CD4-positive, alpha-beta memory T cell (primary cell): ENCODE measurements at regions of chr14 and their contacts with region 1.

Region 1: GRCh38 chr14:50085570-50086320 is 30.6 kb downstream of the VCPKMT start:
- DNase-seq: peak; percentile 21 to 48 (median 28)
- H3K4me3 ChIP-seq: no peak overlapping the region
- H3K4me3 Mint-ChIP-seq: peak overlapping the region; percentile 23 to 78 (median 71)
- H3K27ac ChIP-seq: peak overlapping the region; percentile 99
- H3K27ac Mint-ChIP-seq: peak overlapping the region; percentile 83 to 99 (median 95)
- H3K4me1 ChIP-seq: peaks cover 88% of the 10 kb centered on the region
- H3K4me1 Mint-ChIP-seq: peaks cover 58 to 89% (median 76%) of the 10 kb centered on the region in 4 donors
- H3K27me3 ChIP-seq: no peaks in the 10 kb centered on the region
- H3K27me3 Mint-ChIP-seq: no peaks in the 10 kb centered on the region

Region 2: GRCh38 chr14:49892636-49893308 is 193.0 kb before region 1 on chr14 and contains the start of gene ARF6:
- CTCF ChIA-PET with region 1: no interaction called
- POLR2A ChIA-PET with region 1: interaction called, 21 read pairs
- intact Hi-C with region 1: loop called (anchors 1 kb)
- DNase-seq: peak; percentile 92 to 94 (median 92)
- H3K4me3 ChIP-seq: peak within 1 kb of the TSS; percentile 75 to 100
- H3K4me3 Mint-ChIP-seq: peak within 1 kb of the TSS; percentile 95 to 99 (median 98)
- H3K27ac ChIP-seq: peak within 1 kb of the TSS; percentile 98
- H3K27ac Mint-ChIP-seq: peak within 1 kb of the TSS; percentile 93 to 100 (median 99)
- H3K4me1 ChIP-seq: peaks cover 35% of the 10 kb centered on the region
- H3K4me1 Mint-ChIP-seq: peaks cover 13 to 45% (median 22%) of the 10 kb centered on the region in 4 donors
- H3K27me3 ChIP-seq: no peaks in the 10 kb centered on the region
- H3K27me3 Mint-ChIP-seq: no peaks in the 10 kb centered on the region
- total RNA-seq, gene ARF6: 116 to 124 TPM

Region 3: DNA sequence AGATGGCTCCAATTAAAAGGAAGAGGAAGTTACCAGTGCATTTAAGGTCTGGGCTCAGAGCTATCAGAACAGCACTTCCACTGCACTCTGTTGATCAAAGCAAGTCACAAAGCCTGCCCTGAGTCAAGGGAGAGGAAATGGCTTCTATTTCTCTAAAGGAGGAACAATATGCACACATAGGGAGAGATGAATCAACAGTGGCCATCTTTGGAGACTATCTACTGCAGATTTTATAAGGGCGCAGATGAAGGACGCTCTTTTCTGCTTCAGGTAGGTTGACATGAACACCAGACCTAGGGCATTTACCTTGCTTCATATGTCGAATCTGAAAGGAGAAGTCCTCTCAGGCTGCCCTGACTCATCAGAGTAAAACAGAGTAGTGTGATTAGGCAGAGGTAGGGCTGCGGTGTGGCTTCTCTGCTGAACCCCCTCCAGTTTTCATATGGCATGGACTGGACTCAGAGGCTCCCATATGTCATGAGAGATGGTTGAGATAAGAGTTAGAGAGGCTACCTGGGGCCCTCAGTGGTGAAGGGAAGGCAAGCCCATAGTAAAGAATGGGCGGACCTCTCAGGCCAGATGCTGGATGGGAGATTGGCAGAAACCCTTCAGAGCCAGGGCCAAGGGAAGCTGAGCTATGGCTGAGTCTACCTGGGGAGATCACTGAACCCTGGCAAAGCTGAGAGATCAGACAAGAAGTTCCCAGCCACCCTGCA is 108.5 kb before region 1 on chr14:
- CTCF ChIA-PET with region 1: interaction called, 6 read pairs
- POLR2A ChIA-PET with region 1: interaction called, 35 read pairs
- intact Hi-C with region 1: no loop called
- DNase-seq: peak; percentile 48 to 66 (median 61)
- H3K4me3 ChIP-seq: peak overlapping the region; percentile 50 to 53
- H3K4me3 Mint-ChIP-seq: peak overlapping the region; percentile 75 to 89 (median 84)
- H3K27ac ChIP-seq: peak overlapping the region; percentile 48
- H3K27ac Mint-ChIP-seq: peak overlapping the region; percentile 91 to 95 (median 93)
- H3K4me1 ChIP-seq: peaks cover 100% of the 10 kb centered on the region
- H3K4me1 Mint-ChIP-seq: peaks cover 60 to 96% (median 87%) of the 10 kb centered on the region in 4 donors
- H3K27me3 ChIP-seq: no peaks in the 10 kb centered on the region
- H3K27me3 Mint-ChIP-seq: no peaks in the 10 kb centered on the region

Region 4: DNA sequence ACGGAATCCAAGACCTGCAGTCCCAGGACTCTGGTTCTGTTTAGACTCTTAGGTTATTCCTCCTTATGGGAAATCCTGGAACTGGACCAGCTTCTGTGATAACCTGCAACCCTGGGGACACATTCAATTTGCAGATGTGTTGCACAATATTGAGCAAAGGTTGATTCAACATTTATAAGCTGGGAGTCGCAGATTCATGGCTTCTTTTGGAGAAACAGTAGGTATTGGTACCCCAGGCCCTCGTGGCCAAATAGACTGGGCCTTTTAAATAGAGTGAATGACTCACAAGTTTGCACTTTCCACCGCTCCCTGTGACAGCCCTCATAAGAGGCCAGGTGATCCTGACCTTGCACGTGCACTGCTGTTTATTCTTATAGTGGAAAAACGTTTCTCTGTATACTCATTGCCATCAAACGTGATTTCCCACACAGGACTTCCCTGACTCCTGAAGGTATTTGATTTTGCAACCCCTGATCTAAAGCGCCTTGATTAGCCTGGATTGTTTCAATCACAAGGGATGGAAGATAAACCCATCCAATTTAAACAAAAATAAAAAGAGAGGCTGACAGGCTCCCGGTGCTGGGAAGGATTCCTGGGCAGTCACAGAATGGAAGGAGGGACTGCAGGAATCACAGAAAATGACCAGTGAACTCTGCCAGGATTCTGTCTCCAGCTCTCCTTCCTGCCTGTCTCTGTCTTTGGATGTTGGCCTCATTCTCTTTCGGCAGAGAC is 67.4 kb before region 1 on chr14:
- CTCF ChIA-PET with region 1: no interaction called
- POLR2A ChIA-PET with region 1: no interaction called
- intact Hi-C with region 1: no loop called
- DNase-seq: no peak
- H3K4me3 ChIP-seq: no peak overlapping the region
- H3K4me3 Mint-ChIP-seq: no peak overlapping the region
- H3K27ac ChIP-seq: no peak overlapping the region
- H3K27ac Mint-ChIP-seq: no peak overlapping the region
- H3K4me1 ChIP-seq: peaks cover 12% of the 10 kb centered on the region
- H3K4me1 Mint-ChIP-seq: peaks cover 14 to 32% (median 18%) of the 10 kb centered on the region in 4 donors
- H3K27me3 ChIP-seq: no peaks in the 10 kb centered on the region
- H3K27me3 Mint-ChIP-seq: no peaks in the 10 kb centered on the region

Region 5: GRCh38 chr14:50045039-50045711 is 40.6 kb before region 1 on chr14:
- CTCF ChIA-PET with region 1: interaction called, 4 read pairs
- POLR2A ChIA-PET with region 1: interaction called, 48 read pairs
- intact Hi-C with region 1: loop called (anchors 2 kb)
- DNase-seq: peak; percentile 59 to 79 (median 71)
- H3K4me3 ChIP-seq: peak overlapping the region in 1 of 2 donors; percentile 12
- H3K4me3 Mint-ChIP-seq: peak overlapping the region; percentile 28 to 89 (median 66)
- H3K27ac ChIP-seq: peak overlapping the region; percentile 64
- H3K27ac Mint-ChIP-seq: peak overlapping the region; percentile 89 to 97 (median 94)
- H3K4me1 ChIP-seq: peaks cover 75% of the 10 kb centered on the region
- H3K4me1 Mint-ChIP-seq: peaks cover 56 to 85% (median 71%) of the 10 kb centered on the region in 4 donors
- H3K27me3 ChIP-seq: no peaks in the 10 kb centered on the region
- H3K27me3 Mint-ChIP-seq: no peaks in the 10 kb centered on the region

Region 6: GRCh38 chr14:50099335-50099734 is 13.6 kb after region 1 on chr14:
- CTCF ChIA-PET with region 1: interaction called, 28 read pairs
- POLR2A ChIA-PET with region 1: interaction called, 58 read pairs
- intact Hi-C with region 1: loop called (anchors 1 kb)
- DNase-seq: peak in 1 of 5 donors; percentile 25
- H3K4me3 ChIP-seq: no peak overlapping the region
- H3K4me3 Mint-ChIP-seq: peak overlapping the region in 5 of 8 donors; percentile 7 to 38 (median 28)
- H3K27ac ChIP-seq: no peak overlapping the region
- H3K27ac Mint-ChIP-seq: peak overlapping the region; percentile 10 to 92 (median 80)
- H3K4me1 ChIP-seq: peaks cover 69% of the 10 kb centered on the region
- H3K4me1 Mint-ChIP-seq: peaks cover 41 to 68% (median 54%) of the 10 kb centered on the region in 4 donors
- H3K27me3 ChIP-seq: no peaks in the 10 kb centered on the region
- H3K27me3 Mint-ChIP-seq: no peaks in the 10 kb centered on the region